ENCODE measurements at regions of chr2 and their contacts with region 1.

Region 1: GRCh38 chr2:86562922-86563649 is at the start of gene CHMP3:
- DNase-seq: peak; percentile 97
- ATAC-seq: peak; percentile 92
- H3K4me3 Mint-ChIP-seq: peak within 1 kb of the TSS; percentile 95
- H3K27ac Mint-ChIP-seq: peak within 1 kb of the TSS; percentile 99
- H3K4me1 Mint-ChIP-seq: peaks cover 30% of the 10 kb centered on the region
- H3K27me3 Mint-ChIP-seq: no peaks in the 10 kb centered on the region
- total RNA-seq, gene CHMP3: 35.0 to 35.8 TPM

Region 2: DNA sequence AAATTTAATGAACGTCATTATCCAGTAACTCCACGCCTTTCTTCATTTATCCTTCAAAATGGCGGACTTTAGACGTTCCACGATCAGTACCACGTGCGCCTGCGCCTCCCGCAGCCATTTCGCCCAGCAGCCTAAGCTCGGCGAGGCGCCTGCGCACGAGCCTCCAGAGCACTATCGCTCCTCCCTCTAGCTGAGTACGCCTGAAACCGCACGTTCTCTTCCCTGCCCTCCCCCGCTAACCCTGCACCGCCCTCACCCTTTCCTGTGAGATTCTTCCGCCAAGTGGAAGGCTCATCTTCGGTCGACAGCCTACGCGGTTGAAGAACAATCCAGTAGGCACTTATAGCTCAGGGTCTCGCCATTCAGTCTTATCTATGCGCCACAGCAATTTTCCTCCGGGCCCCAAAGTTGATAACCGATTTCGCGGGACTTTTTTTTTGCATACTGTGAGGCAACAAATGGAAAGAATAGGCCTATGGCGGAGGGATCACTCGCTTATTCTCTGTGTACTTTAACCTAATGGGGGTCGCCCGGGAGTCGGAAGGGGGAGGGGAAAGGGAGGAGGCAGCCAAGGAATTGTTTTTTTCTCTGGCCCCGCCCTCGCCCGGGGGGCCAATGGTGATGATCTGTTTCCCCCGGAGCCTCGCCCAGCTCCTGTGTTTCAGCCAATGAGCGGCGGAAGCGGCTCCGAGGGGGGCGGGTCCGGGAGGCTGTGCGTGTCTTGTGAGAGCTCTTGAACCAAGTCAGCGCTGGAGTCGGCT is 122.3 kb before region 1 on chr2 and contains the start of gene KDM3A:
- CTCF ChIA-PET with region 1: no interaction called
- POLR2A ChIA-PET with region 1: interaction called, 4 read pairs
- intact Hi-C with region 1: loop called (anchors 1 to 2 kb)
- DNase-seq: peak; percentile 100
- ATAC-seq: peak; percentile 88
- H3K4me3 Mint-ChIP-seq: peak within 1 kb of the TSS; percentile 90
- H3K27ac Mint-ChIP-seq: peak within 1 kb of the TSS; percentile 99
- H3K4me1 Mint-ChIP-seq: peaks cover 37% of the 10 kb centered on the region
- H3K27me3 Mint-ChIP-seq: no peaks in the 10 kb centered on the region
- total RNA-seq, gene KDM3A: 68.9 to 82.9 TPM

Region 3: GRCh38 chr2:86584151-86584913 is 21.2 kb after region 1 on chr2:
- CTCF ChIA-PET with region 1: interaction called, 3 read pairs
- POLR2A ChIA-PET with region 1: no interaction called
- intact Hi-C with region 1: loop called (anchors 1 to 2 kb)
- DNase-seq: peak; percentile 16
- ATAC-seq: peak; percentile 88
- H3K4me3 Mint-ChIP-seq: no peak overlapping the region
- H3K27ac Mint-ChIP-seq: peak overlapping the region; percentile 74
- H3K4me1 Mint-ChIP-seq: peaks cover 20% of the 10 kb centered on the region
- H3K27me3 Mint-ChIP-seq: no peaks in the 10 kb centered on the region